ENCODE measurements at regions of chr1 and their contacts with region 1.

Region 1: DNA sequence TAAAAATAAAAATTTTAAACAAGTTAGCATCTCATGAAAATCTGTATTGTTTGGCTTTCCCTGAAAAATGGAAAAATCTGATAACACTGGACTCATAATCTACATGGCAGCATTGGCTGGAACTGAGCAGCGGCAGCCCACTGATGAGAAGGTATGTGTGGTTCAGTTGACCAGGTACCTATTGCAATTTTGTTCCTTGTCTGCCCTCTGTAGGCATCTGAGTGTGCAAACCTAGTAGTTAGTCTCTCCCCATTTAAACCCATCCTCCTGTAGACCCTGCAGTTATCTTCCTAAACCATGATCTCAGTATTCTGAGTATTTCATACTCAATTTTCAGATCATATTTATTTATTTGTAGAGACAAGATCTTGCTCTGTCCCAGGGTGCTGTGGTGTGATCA is 59.4 kb upstream of the SERBP1 start:
- DNase-seq: no peak
- ATAC-seq: no peak

Region 2: GRCh38 chr1:66978201-66978600 is 511.4 kb before region 1 on chr1:
- intact Hi-C with region 1: loop called in 1 of 2 experiments (anchors 10 kb)
- DNase-seq: no peak
- ATAC-seq: no peak

Region 3: DNA sequence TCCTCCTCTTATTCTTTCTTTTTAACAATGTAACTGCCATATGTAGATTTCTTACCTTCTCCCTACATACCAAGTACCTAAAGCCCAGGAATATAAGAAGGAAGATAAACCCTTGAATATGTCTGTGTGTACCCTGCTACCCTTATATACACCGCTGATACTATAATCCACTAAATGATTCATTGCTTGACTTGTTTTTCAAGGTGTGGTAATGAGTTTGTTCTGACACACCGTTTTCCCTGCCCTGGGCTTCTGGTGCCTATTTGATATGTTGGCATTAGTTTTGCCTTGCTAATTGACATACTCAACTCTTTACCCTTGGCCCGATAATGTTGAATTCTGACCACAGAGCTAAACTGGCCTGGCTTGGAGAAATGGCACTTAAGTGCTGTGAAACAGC is 259.1 kb before region 1 on chr1:
- intact Hi-C with region 1: loop called in 1 of 2 experiments (anchors 10 kb)
- DNase-seq: no peak
- ATAC-seq: no peak

Region 4: GRCh38 chr1:67347688-67348472 is 141.8 kb before region 1 on chr1:
- intact Hi-C with region 1: loop called in 1 of 2 experiments (anchors 10 kb)
- DNase-seq: peak in 1 of 2 donors; percentile 24
- ATAC-seq: peak; percentile 76

Measured in left colon (tissue), 2 donors.